Right ventricle myocardium superior (tissue), 1 donor: ENCODE measurements at regions of chr3 and their contacts with region 1.

Region 1: GRCh38 chr3:42739401-42740158 is 33.5 kb downstream of the CCDC13 start:
- DNase-seq: peak; percentile 93
- ATAC-seq: peak; percentile 93

Region 2: GRCh38 chr3:42701142-42702065 is 38.2 kb before region 1 on chr3:
- intact Hi-C with region 1: loop called (anchors 5 kb)
- DNase-seq: peak; percentile 89
- ATAC-seq: peak; percentile 74